BJ (cell line): ENCODE measurements at regions of chr15 and their contacts with region 1.

Region 1: DNA sequence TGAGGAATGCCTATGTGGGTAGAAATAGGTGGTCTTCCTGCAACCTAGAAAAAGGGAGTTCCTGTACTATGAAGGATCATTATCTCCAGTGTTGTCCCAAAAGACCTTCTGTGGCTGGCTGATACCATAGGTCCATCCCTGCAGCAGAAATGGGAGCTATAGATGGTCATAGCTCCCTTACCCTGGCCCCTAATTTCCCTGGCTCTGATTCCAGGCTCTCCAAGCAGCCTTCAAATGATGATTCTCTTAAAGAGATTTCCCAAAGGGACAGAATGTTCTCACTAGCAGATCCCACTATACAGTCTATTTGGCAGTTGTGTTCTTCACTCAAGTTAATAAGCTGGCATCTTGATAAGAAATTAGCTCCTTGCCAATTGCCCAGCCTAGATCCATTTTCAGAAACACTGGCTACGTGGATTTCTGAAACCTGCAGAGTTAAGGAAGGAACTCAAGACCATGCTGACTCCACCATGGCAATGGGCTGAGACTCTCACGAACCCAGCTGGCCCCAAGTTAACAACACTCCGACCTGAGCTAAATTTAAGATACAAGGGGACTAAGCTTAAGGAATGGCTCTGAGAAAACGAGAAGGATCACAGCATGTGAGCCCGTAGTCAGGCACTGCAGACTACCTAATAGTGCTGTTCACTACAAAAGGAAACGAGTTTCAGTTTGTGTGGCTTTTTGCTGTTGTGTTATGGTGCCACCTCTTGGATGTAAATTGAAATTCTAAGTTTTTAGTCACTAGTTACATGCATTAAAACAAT is 11.4 kb downstream of the C15orf40 start:
- DNase-seq: no peak
- H3K4me3 ChIP-seq: peak overlapping the region; percentile 29
- H3K27me3 ChIP-seq: no peaks in the 10 kb centered on the region
- CTCF ChIP-seq: peak; percentile 58

Region 2: DNA sequence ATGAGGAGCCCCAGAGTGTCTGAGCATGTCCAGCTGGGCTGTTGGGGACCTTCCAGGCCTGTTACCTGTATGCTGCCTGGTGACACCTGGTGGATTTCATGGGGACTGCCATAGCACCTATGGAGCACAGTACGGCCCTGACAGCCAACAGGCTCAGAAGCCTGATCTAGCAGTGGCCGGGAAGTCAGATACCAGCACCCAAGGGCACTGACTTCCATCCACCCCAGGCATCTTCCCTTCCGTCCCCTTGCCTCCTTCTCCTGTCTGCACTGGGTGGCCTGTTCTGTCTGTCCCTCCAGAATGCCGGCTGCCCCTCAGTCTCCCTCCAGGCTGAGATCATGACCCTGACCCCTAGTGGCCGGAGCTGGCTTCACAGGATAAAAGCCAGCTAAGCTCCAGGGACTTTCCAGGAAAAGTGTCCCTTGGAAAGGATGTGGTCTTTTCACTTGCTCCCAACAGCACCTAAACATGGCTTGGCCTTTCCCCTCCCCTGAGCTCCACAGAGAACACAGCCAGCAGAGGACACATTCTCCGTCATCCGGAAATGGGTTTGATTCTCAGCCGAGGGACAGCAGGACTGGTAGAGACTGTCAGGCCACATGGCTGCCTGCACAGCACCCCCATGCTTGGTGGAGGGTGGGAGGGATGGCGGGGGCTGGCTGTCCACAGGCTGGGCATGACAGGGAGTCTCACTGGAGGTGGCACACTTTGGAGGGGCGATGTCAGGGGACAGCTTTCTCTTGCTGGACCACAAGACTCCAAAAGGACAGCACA is 469.3 kb before region 1 on chr15:
- CTCF ChIA-PET with region 1: interaction called, 10 read pairs
- POLR2A ChIA-PET with region 1: no interaction called
- DNase-seq: no peak
- H3K4me3 ChIP-seq: no peak overlapping the region
- H3K27me3 ChIP-seq: no peaks in the 10 kb centered on the region
- CTCF ChIP-seq: peak; percentile 84

Region 3: GRCh38 chr15:82832601-82833361 is 167.3 kb before region 1 on chr15:
- CTCF ChIA-PET with region 1: no interaction called
- POLR2A ChIA-PET with region 1: no interaction called
- DNase-seq: peak; percentile 65
- H3K4me3 ChIP-seq: no peak overlapping the region
- H3K27me3 ChIP-seq: no peaks in the 10 kb centered on the region
- CTCF ChIP-seq: 0 out of 2 replicates have a peak, but pooled peaks have one; percentile 19

Region 4: DNA sequence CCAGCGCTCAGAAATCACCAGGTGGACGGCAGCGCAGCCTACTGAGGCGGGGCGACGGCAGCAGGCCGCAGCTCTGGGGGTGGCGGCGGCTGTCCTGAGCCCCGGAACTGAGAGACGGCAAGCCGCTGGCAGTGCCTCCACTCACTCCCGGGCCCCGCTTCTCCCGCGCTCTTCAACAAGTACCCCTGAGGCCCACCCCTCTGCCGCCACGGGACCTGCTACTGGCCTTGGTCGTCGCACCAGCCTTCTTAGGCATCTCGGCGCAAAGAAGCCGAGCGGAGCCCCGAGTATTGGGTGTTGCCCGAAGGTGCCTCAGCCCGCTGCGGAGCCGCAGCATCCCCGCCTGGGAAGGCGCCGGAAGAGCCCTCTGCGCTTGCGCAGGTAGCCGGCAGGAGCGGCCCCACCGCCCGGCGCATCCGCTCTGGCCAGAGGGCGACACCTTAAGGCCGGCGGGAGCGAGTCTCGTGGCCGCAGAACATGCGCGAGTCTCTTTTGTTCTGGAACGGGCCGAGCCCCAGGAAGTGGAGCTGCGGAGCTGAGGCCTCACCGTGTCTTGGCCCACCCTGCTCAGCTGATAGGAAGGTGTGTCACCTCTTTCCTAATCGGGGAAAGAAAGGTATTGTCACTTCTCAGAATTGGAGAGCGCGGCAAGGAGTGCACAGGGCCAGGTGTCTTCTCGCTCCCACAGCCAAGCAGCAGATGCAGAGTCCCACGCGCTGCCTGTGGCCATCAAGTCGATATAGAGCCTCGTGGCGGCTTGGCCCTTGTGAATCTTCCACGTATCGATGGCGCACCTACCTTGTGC is 11.4 kb after region 1 on chr15 and contains the start of gene C15orf40:
- CTCF ChIA-PET with region 1: interaction called, 29 read pairs
- POLR2A ChIA-PET with region 1: no interaction called
- DNase-seq: no peak
- H3K4me3 ChIP-seq: peak within 1 kb of the TSS; percentile 59
- H3K27me3 ChIP-seq: no peaks in the 10 kb centered on the region
- CTCF ChIP-seq: peak; percentile 78
- polyA plus RNA-seq, gene C15orf40: 17.9 and 21.1 TPM in 2 replicates